GM10248 (cell line): ENCODE measurements at regions of chr7 and their contacts with region 1.

Region 1: GRCh38 chr7:5237286-5237685 is 45.5 kb upstream of the SLC29A4 start:
- DNase-seq: no peak
- CTCF ChIP-seq: no peak

Region 2: DNA sequence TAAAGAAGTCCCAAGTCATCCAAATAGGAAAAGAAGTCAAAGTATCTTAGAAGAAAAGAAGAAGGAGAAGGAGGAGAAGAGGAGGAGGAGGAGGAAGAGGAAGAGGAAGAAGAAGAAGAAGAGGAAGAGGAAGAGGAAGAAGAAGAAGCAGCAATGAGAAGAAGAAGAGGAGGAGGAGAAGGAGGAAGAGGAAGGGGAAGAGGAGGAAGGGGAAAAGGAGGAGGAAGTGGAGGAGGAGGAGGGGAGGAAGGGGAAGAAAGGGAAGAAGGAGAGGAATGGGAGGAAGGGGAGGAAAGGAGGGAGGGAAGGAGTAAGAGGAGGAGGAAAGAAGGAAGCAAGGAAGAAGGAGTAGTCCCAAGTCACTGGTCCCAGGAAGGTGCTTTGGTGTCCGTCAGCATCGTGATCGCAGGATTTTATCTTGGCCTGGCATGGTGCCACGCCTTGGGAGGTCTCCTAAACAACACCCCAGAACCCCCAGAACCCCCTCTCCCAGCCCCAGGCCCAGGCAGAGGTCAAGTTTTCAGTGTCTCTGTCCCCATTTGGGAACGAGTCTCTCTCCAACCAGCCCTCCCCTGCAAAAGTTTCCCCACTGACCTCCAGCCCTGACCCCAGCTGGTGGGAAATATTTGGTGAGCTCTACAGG is 332.0 kb before region 1 on chr7:
- CTCF ChIA-PET with region 1: no interaction called
- POLR2A ChIA-PET with region 1: no interaction called
- DNase-seq: no peak
- CTCF ChIP-seq: no peak

Region 3: DNA sequence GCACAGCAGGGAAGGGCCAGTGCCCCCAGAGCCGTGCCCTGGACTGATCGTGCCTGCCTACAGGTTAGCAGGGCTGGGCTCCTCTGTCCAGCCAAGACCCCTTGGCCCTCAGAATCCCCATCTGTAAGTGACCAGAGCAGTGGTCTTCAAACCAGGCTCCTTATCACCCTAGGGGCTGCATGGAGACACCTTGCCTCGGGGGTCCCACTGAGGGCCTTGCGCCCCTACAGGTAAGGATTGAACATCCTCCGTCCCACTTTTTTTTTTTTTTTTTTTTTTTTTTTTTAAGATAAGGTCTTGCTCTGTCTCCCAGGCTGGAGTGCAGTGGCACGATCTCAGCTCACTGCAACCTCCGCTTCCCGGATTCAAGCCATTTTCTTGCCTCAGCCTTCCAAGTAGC is 321.2 kb before region 1 on chr7:
- CTCF ChIA-PET with region 1: no interaction called
- POLR2A ChIA-PET with region 1: no interaction called
- DNase-seq: no peak
- CTCF ChIP-seq: no peak

Region 4: GRCh38 chr7:5218564-5219360 is 18.5 kb before region 1 on chr7:
- CTCF ChIA-PET with region 1: interaction called, 20 read pairs
- POLR2A ChIA-PET with region 1: interaction called, 6 read pairs
- DNase-seq: peak; percentile 89
- CTCF ChIP-seq: no peak

Region 5: DNA sequence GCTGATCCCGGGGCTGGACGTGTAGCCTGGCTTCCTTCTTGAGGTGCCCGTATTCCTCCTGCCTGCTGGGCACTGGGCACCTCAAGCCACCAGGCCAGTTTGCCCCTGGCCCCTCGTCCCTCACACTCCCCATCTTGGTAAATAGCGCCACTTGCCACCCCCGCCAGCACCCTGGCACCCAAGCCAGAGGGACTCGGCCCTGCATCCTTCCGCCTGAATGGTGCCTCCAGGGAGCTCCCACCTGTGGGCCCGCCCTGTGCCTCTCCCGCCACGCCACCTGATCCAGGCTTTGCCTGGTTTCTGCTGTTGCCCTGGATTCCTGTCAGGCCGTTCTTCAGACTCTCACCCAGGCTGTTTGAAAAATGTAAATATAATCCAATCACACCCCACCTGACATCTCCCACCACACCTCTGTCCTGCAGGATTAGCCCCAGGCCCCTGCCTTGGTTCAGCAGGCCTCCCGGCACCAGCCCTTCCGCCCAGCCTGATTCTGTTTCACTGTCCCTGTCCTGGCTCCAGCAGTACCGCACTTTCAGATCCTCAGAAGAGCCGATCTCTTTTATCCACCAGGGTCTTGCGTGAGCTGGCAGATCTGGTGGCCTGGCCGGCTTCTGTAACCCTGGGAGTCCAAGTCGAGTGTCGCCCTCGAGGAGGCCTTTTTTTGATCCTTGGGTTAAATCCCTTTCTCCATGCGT is 13.5 kb before region 1 on chr7:
- CTCF ChIA-PET with region 1: interaction called, 20 read pairs
- POLR2A ChIA-PET with region 1: interaction called, 6 read pairs
- DNase-seq: no peak
- CTCF ChIP-seq: no peak

Region 6: GRCh38 chr7:5255832-5256231 is 18.5 kb after region 1 on chr7:
- CTCF ChIA-PET with region 1: interaction called, 31 read pairs
- POLR2A ChIA-PET with region 1: no interaction called
- DNase-seq: no peak
- CTCF ChIP-seq: no peak

Region 7: GRCh38 chr7:5390918-5391317 is 153.6 kb after region 1 on chr7:
- CTCF ChIA-PET with region 1: no interaction called
- POLR2A ChIA-PET with region 1: no interaction called
- DNase-seq: no peak
- CTCF ChIP-seq: no peak

Region 8: DNA sequence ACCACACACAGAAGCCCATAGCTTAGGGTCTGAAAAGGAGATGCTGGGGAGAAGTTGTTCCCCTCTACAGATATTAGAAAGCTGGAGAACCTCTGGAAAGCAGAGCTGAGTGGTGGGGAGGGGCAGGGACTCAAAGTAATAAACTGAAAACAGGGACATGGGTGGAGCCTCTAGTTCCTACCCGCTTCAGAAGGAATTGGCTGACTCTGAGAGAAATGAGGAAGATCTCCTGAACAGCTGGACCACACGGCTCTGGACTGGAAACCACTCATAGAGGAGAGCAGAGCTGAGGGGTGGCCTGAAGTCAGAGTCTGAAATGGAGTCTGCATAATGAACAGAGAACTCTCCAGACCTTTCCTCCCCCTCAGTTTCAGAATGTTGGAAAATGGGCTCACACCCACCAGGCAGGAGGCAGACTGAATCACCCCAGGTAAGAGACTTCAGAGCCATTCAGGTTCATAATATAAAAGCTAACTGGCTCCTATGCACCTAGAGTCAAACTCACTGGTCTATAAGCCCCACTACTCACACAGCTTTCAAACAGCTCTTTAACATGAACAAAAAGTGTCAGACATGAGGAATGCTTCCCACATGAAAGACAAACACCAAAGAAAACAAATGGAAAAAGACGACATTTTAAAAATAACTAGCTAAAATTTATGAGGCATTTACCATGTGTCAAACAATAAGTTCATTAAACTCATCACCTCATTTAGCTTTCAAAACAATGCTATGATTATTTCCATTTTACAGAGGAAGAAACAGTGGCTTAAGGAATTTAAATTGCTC is 476.0 kb after region 1 on chr7:
- CTCF ChIA-PET with region 1: no interaction called
- POLR2A ChIA-PET with region 1: no interaction called
- DNase-seq: no peak
- CTCF ChIP-seq: no peak